Lower leg skin (tissue), 4 donors: ENCODE measurements at regions of chr12 and their contacts with region 1.

Region 1: GRCh38 chr12:93502802-93503623 is 35.7 kb downstream of the MRPL42 start:
- DNase-seq: peak in 1 of 2 donors; percentile 28
- H3K4me3 ChIP-seq: no peak overlapping the region
- CTCF ChIP-seq: peak in 1 of 3 donors; percentile 34
- POLR2A ChIP-seq: no peak

Region 2: DNA sequence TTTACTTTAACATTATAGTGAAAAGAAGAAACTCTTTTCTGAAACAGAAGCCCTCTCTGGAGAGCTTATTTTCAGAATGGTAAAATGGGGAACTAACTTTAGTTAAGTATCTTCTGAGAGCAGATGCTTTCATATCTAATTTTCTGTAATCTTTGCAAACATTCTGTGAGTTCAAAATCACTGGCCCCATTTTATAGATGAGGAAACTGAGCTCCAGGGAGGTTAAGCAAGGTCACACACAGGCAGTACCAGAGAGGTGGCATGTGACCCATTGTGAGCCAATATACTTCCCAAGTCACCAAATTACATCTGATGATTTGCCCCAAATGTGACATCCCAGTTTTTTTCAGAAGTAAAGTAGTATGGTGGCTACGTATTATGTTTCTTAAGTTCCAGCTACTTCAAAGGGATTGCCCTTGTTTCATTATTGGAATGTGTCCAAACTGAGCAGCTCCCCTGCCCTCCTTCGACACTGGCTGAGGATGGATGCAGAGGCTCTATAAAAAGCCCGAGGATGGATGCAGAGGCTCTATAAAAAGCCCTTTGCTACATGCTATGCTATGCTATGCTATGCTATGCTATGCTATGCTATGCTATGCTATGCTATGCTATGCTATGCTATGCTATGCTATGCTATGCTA is 161.5 kb before region 1 on chr12:
- intact Hi-C with region 1: no loop called
- DNase-seq: no peak
- H3K4me3 ChIP-seq: no peak overlapping the region
- CTCF ChIP-seq: no peak
- POLR2A ChIP-seq: no peak

Region 3: GRCh38 chr12:93766796-93767523 is 263.9 kb after region 1 on chr12:
- intact Hi-C with region 1: loop called (anchors 10 kb)
- DNase-seq: no peak
- H3K4me3 ChIP-seq: no peak overlapping the region
- CTCF ChIP-seq: peak in 1 of 3 donors; percentile 36
- POLR2A ChIP-seq: no peak

Region 4: GRCh38 chr12:94101738-94102660 is 599.0 kb after region 1 on chr12:
- intact Hi-C with region 1: loop called (anchors 5 kb)
- DNase-seq: peak; percentile 89 to 97
- H3K4me3 ChIP-seq: peak overlapping the region; percentile 39
- CTCF ChIP-seq: peak in 1 of 3 donors; percentile 42
- POLR2A ChIP-seq: no peak